Naive thymus-derived CD4-positive, alpha-beta T cell (primary cell): ENCODE measurements at regions of chr5 and their contacts with region 1.

Region 1: DNA sequence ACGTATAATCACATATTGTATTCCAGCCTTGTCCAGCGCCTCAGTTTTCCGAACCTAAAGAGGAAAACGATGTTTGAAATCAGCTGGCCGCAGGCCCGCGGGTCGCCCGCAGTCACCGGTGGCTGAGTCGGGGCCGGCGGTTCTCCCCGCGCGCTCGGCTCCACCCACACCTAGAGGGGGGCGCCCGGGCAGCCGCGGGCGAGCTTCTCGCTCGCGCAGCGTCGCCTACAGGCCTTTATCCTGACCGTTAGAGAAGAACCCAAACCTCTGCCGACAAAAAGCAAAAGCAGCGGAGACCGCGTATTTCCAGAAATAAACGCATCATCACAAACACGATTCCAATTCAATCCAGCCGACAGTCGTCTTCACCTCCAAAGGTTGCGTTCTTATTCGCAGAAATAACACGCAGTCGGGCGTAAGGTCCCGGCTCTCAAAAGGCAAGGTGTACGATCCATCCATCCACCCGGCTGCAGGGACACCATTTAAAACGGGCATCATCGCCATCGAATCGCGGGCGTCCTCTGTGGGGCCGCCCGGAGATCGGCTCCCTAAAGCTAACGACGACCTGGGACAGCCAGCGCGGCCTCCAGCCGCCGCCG is 680 bp upstream of the NIPBL start:
- DNase-seq: peak; percentile 59 to 79 (median 71)
- ATAC-seq: peak; percentile 76
- H3K4me3 ChIP-seq: peak overlapping the region; percentile 98
- H3K4me3 Mint-ChIP-seq: peak overlapping the region; percentile 88 to 97 (median 94)
- H3K27ac ChIP-seq: peak overlapping the region; percentile 98
- H3K27ac Mint-ChIP-seq: peak overlapping the region; percentile 91 to 99 (median 96)
- H3K4me1 ChIP-seq: peaks cover 23 to 29% of the 10 kb centered on the region in 2 donors
- H3K4me1 Mint-ChIP-seq: peaks cover 23 to 71% (median 62%) of the 10 kb centered on the region in 7 donors
- H3K27me3 ChIP-seq: no peaks in the 10 kb centered on the region
- H3K27me3 Mint-ChIP-seq: no peaks in the 10 kb centered on the region

Region 2: GRCh38 chr5:34915139-34915855 is 1960.6 kb before region 1 on chr5 and contains the starts of genes BRIX1 and RAD1:
- CTCF ChIA-PET with region 1: no interaction called
- POLR2A ChIA-PET with region 1: no interaction called
- intact Hi-C with region 1: loop called in 1 of 2 experiments (anchors 1 kb)
- DNase-seq: peak; percentile 86 to 95 (median 92)
- ATAC-seq: peak; percentile 99
- H3K4me3 ChIP-seq: peak within 1 kb of the TSS; percentile 99
- H3K4me3 Mint-ChIP-seq: peak within 1 kb of the TSS in 3 of 10 donors; percentile 56 to 80 (median 60)
- H3K27ac ChIP-seq: peak within 1 kb of the TSS; percentile 84
- H3K27ac Mint-ChIP-seq: peak within 1 kb of the TSS in 2 of 9 donors; percentile 59 to 69
- H3K4me1 ChIP-seq: peaks cover 19 to 34% of the 10 kb centered on the region in 2 donors
- H3K4me1 Mint-ChIP-seq: peaks cover 17 to 41% (median 35%) of the 10 kb centered on the region in 7 donors
- H3K27me3 ChIP-seq: no peaks in the 10 kb centered on the region
- H3K27me3 Mint-ChIP-seq: no peaks in the 10 kb centered on the region
- total RNA-seq, gene BRIX1: 13.4 to 45.2 (median 26.8) TPM
- total RNA-seq, gene RAD1: 19.3 to 29.6 (median 24.6) TPM

Region 3: GRCh38 chr5:36151434-36152323 is 724.2 kb before region 1 on chr5 and contains the starts of genes LMBRD2 and SKP2:
- CTCF ChIA-PET with region 1: no interaction called
- POLR2A ChIA-PET with region 1: interaction called, 4 read pairs
- intact Hi-C with region 1: loop called (anchors 1 kb)
- DNase-seq: peak; percentile 88 to 99 (median 96)
- ATAC-seq: peak; percentile 100
- H3K4me3 ChIP-seq: peak within 1 kb of the TSS; percentile 87
- H3K4me3 Mint-ChIP-seq: peak within 1 kb of the TSS; percentile 89 to 98 (median 96)
- H3K27ac ChIP-seq: peak within 1 kb of the TSS; percentile 85
- H3K27ac Mint-ChIP-seq: peak within 1 kb of the TSS; percentile 76 to 97 (median 91)
- H3K4me1 ChIP-seq: peaks cover 24% of the 10 kb centered on the region in 2 donors
- H3K4me1 Mint-ChIP-seq: peaks cover 48 to 92% (median 77%) of the 10 kb centered on the region in 7 donors
- H3K27me3 ChIP-seq: no peaks in the 10 kb centered on the region
- H3K27me3 Mint-ChIP-seq: no peaks in the 10 kb centered on the region
- total RNA-seq, gene LMBRD2: 6.8 to 17.1 (median 12.3) TPM
- total RNA-seq, gene SKP2: 11.9 to 37.1 (median 23.3) TPM

Region 4: GRCh38 chr5:36664781-36665180 is 211.1 kb before region 1 on chr5:
- CTCF ChIA-PET with region 1: no interaction called
- POLR2A ChIA-PET with region 1: no interaction called
- intact Hi-C with region 1: no loop called
- DNase-seq: no peak
- ATAC-seq: no peak
- H3K4me3 ChIP-seq: no peak overlapping the region
- H3K4me3 Mint-ChIP-seq: no peak overlapping the region
- H3K27ac ChIP-seq: no peak overlapping the region
- H3K27ac Mint-ChIP-seq: no peak overlapping the region
- H3K4me1 ChIP-seq: no peaks in the 10 kb centered on the region
- H3K4me1 Mint-ChIP-seq: no peaks in the 10 kb centered on the region
- H3K27me3 ChIP-seq: no peaks in the 10 kb centered on the region
- H3K27me3 Mint-ChIP-seq: peaks cover 0 to 23% (median 11%) of the 10 kb centered on the region in 5 donors

Region 5: DNA sequence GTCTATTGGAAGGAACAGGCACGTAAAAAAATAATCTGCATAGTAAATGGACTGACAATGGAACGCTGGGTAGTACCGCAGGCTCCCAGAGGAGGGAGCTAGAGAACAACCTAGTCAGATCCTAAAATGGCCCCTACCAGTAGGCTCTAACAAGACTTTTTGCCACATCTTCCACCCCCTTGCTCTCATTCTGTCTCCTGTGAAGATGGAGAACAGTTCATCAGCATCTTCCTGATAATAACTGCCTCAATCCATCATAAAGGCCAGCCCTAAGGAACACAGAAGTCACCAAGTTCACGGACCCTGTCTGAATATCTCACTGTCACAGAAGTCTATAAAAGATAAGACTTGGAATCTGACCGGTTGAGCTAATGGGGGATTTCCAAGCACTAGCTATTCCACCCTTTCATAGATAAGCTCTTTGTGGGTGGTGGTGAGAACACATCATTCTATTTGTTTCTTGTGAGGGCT is 136.1 kb before region 1 on chr5:
- CTCF ChIA-PET with region 1: interaction called, 13 read pairs
- POLR2A ChIA-PET with region 1: no interaction called
- intact Hi-C with region 1: loop called in 1 of 2 experiments (anchors 1 kb)
- DNase-seq: peak; percentile 46 to 73 (median 66)
- ATAC-seq: peak; percentile 91
- H3K4me3 ChIP-seq: no peak overlapping the region
- H3K4me3 Mint-ChIP-seq: no peak overlapping the region
- H3K27ac ChIP-seq: no peak overlapping the region
- H3K27ac Mint-ChIP-seq: peak overlapping the region in 1 of 9 donors; percentile 47
- H3K4me1 ChIP-seq: peaks cover 0 to 4% of the 10 kb centered on the region in 2 donors
- H3K4me1 Mint-ChIP-seq: peaks cover 8 to 13% (median 10%) of the 10 kb centered on the region in 7 donors
- H3K27me3 ChIP-seq: no peaks in the 10 kb centered on the region
- H3K27me3 Mint-ChIP-seq: peaks cover 29 to 44% (median 36%) of the 10 kb centered on the region in 5 donors

Region 6: GRCh38 chr5:36908544-36909260 is 32.8 kb after region 1 on chr5:
- CTCF ChIA-PET with region 1: no interaction called
- POLR2A ChIA-PET with region 1: interaction called, 3 read pairs
- intact Hi-C with region 1: loop called in 1 of 2 experiments (anchors 2 kb)
- DNase-seq: no peak
- ATAC-seq: no peak
- H3K4me3 ChIP-seq: no peak overlapping the region
- H3K4me3 Mint-ChIP-seq: peak overlapping the region in 5 of 10 donors; percentile 16 to 57 (median 46)
- H3K27ac ChIP-seq: no peak overlapping the region
- H3K27ac Mint-ChIP-seq: peak overlapping the region in 3 of 9 donors; percentile 12 to 32 (median 13)
- H3K4me1 ChIP-seq: peaks cover 0 to 27% of the 10 kb centered on the region in 2 donors
- H3K4me1 Mint-ChIP-seq: peaks cover 18 to 60% (median 46%) of the 10 kb centered on the region in 7 donors
- H3K27me3 ChIP-seq: no peaks in the 10 kb centered on the region
- H3K27me3 Mint-ChIP-seq: no peaks in the 10 kb centered on the region

Region 7: DNA sequence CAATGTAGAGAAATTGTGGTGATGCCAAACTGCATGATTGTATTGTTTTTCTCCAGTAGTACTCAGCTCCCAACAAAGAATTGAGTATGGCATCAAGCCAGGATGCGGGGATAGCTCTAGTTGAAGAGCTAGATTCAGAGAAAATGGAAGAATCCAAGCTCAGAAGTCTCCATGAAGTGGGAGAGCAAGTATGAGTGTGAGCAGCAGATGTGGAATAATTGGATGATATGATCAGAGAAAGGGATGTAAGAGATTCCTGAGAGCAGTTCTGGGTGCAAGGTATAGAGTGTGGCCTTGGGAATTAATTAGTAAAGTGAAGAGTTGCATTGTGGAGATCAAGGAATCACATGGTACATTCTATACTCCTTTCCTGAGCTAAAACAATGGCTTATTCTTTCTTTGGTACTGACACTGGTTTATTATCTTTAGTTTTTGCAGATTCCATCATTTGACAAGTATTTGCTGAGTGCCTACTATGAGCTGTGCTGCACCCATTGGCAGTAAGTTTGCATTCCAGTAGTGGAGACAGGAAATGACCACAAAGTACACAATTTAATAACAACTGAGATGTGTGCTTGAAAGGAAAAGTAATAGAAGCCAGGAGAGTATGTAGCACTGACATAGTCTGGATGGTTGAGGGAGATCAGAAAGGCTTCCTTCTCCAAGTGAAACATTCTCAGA is 196.2 kb after region 1 on chr5:
- CTCF ChIA-PET with region 1: no interaction called
- POLR2A ChIA-PET with region 1: no interaction called
- intact Hi-C with region 1: no loop called
- DNase-seq: no peak
- ATAC-seq: no peak
- H3K4me3 ChIP-seq: no peak overlapping the region
- H3K4me3 Mint-ChIP-seq: no peak overlapping the region
- H3K27ac ChIP-seq: no peak overlapping the region
- H3K27ac Mint-ChIP-seq: no peak overlapping the region
- H3K4me1 ChIP-seq: no peaks in the 10 kb centered on the region
- H3K4me1 Mint-ChIP-seq: no peaks in the 10 kb centered on the region
- H3K27me3 ChIP-seq: no peaks in the 10 kb centered on the region
- H3K27me3 Mint-ChIP-seq: no peaks in the 10 kb centered on the region

Region 8: GRCh38 chr5:37111426-37112382 is 235.8 kb after region 1 on chr5:
- CTCF ChIA-PET with region 1: no interaction called
- POLR2A ChIA-PET with region 1: no interaction called
- intact Hi-C with region 1: loop called (anchors 2 to 5 kb)
- DNase-seq: peak in 7 of 9 donors; percentile 42 to 73 (median 62)
- ATAC-seq: peak; percentile 86
- H3K4me3 ChIP-seq: peak overlapping the region; percentile 19
- H3K4me3 Mint-ChIP-seq: peak overlapping the region; percentile 42 to 83 (median 72)
- H3K27ac ChIP-seq: peak overlapping the region; percentile 47
- H3K27ac Mint-ChIP-seq: peak overlapping the region; percentile 6 to 88 (median 48)
- H3K4me1 ChIP-seq: peaks cover 14 to 30% of the 10 kb centered on the region in 2 donors
- H3K4me1 Mint-ChIP-seq: peaks cover 33 to 50% (median 43%) of the 10 kb centered on the region in 7 donors
- H3K27me3 ChIP-seq: no peaks in the 10 kb centered on the region
- H3K27me3 Mint-ChIP-seq: no peaks in the 10 kb centered on the region

Region 9: DNA sequence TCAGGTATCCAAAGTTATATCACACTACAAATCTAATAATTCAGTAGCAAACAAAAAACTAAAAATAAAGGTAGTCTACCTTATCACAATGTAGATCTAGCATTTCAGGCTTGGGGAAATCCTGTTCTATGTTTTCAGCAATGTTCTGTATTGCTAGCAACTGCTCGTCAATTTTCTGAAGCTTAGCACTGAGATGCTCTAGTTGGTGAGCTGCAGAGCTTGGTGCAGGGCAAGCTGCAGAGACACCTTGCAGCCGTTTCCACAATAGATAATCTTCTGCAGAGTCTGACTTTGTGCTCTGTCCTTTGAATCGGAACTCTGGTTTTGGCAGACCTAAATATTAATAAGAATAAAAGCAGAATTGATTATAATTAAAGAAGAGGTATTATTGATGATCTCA is 277.8 kb after region 1 on chr5:
- CTCF ChIA-PET with region 1: no interaction called
- POLR2A ChIA-PET with region 1: no interaction called
- intact Hi-C with region 1: no loop called
- DNase-seq: no peak
- ATAC-seq: no peak
- H3K4me3 ChIP-seq: no peak overlapping the region
- H3K4me3 Mint-ChIP-seq: no peak overlapping the region
- H3K27ac ChIP-seq: no peak overlapping the region
- H3K27ac Mint-ChIP-seq: no peak overlapping the region
- H3K4me1 ChIP-seq: no peaks in the 10 kb centered on the region
- H3K4me1 Mint-ChIP-seq: peaks cover 0 to 6% (median 4%) of the 10 kb centered on the region in 7 donors
- H3K27me3 ChIP-seq: no peaks in the 10 kb centered on the region
- H3K27me3 Mint-ChIP-seq: no peaks in the 10 kb centered on the region

Region 10: GRCh38 chr5:38453506-38453905 is 1577.6 kb after region 1 on chr5:
- CTCF ChIA-PET with region 1: no interaction called
- POLR2A ChIA-PET with region 1: no interaction called
- intact Hi-C with region 1: loop called in 1 of 2 experiments (anchors 10 kb)
- DNase-seq: peak in 8 of 9 donors; percentile 50 to 82 (median 73)
- ATAC-seq: peak; percentile 86
- H3K4me3 ChIP-seq: no peak overlapping the region
- H3K4me3 Mint-ChIP-seq: peak overlapping the region; percentile 36 to 77 (median 66)
- H3K27ac ChIP-seq: no peak overlapping the region
- H3K27ac Mint-ChIP-seq: peak overlapping the region in 8 of 9 donors; percentile 6 to 82 (median 43)
- H3K4me1 ChIP-seq: peaks cover 21 to 32% of the 10 kb centered on the region in 2 donors
- H3K4me1 Mint-ChIP-seq: peaks cover 19 to 38% (median 30%) of the 10 kb centered on the region in 7 donors
- H3K27me3 ChIP-seq: peaks cover 0 to 3% of the 10 kb centered on the region in 2 donors
- H3K27me3 Mint-ChIP-seq: peaks cover 68 to 89% (median 82%) of the 10 kb centered on the region in 5 donors